Left cardiac atrium (tissue), 4 donors: ENCODE measurements at regions of chr1 and their contacts with region 1.

Region 1: GRCh38 chr1:8348777-8349491 is 31.0 kb downstream of the SLC45A1 start:
- DNase-seq: peak; percentile 74
- ATAC-seq: peak; percentile 55 to 73

Region 2: GRCh38 chr1:7989762-7990428 is 359.0 kb before region 1 on chr1:
- intact Hi-C with region 1: loop called in 1 of 2 experiments (anchors 10 kb)
- DNase-seq: no peak
- ATAC-seq: peak; percentile 21 to 44

Region 3: GRCh38 chr1:8571200-8571984 is 222.5 kb after region 1 on chr1:
- intact Hi-C with region 1: no loop called
- DNase-seq: no peak
- ATAC-seq: peak; percentile 76 to 77